ENCODE measurements at regions of chr16 and their contacts with region 1.

Region 1: GRCh38 chr16:7503666-7504065 is 171.0 kb downstream of the RBFOX1 start:
- DNase-seq: no peak
- H3K4me3 ChIP-seq: no peak overlapping the region
- H3K27ac ChIP-seq: no peak overlapping the region
- H3K4me1 ChIP-seq: no peaks in the 10 kb centered on the region
- H3K27me3 ChIP-seq: no peaks in the 10 kb centered on the region
- CTCF ChIP-seq: no peak
- EP300 ChIP-seq: no peak
- POLR2A ChIP-seq: no peak

Region 2: GRCh38 chr16:8469102-8469778 is 965.6 kb after region 1 on chr16:
- in situ Hi-C with region 1: no loop called
- intact Hi-C with region 1: loop called (anchors 5 kb)
- DNase-seq: no peak
- H3K4me3 ChIP-seq: no peak overlapping the region
- H3K27ac ChIP-seq: no peak overlapping the region
- H3K4me1 ChIP-seq: no peaks in the 10 kb centered on the region
- H3K27me3 ChIP-seq: no peaks in the 10 kb centered on the region
- CTCF ChIP-seq: no peak
- EP300 ChIP-seq: no peak
- POLR2A ChIP-seq: no peak